Heart left ventricle (tissue), 16 donors: ENCODE measurements at regions of chr7 and their contacts with region 1.

Region 1: DNA sequence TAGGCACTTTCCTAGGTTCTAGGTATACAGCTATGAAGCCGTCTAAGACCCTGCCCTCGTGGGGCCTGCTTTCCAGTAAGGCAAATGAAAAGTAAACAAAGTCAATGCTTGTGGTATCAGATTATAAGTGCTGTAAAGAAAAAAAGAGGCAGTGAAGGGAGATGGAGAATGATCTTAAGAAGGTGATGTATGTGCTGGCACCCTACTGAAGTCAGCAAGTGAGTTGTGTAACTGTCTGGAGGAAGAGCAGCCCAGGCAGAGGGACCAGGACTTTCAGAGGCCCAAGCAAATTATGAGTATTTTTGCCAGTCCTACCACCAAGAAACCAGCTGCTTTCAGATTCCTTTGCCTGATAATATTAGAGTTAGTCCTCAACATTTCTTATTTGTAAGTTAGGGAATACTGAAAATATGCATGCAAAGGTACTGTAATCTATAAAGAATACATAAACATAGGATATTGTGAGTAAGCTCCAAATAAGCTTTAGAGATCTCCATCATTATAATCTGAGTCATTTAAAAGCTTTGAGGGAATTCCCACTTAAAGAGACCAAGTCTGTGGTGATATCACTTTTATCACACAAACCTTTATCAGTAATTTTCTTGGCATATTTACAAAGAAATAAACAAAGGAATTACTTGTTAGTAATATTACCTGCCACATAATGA is 329.2 kb upstream of the LRGUK start:
- DNase-seq: no peak
- ATAC-seq: no peak
- H3K4me3 ChIP-seq: no peak overlapping the region
- H3K27ac ChIP-seq: no peak overlapping the region
- H3K4me1 ChIP-seq: peaks cover 0 to 17% (median 7%) of the 10 kb centered on the region in 12 donors
- H3K27me3 ChIP-seq: no peaks in the 10 kb centered on the region
- CTCF ChIP-seq: no peak
- POLR2A ChIP-seq: no peak

Region 2: GRCh38 chr7:133452577-133452976 is 345.4 kb before region 1 on chr7:
- intact Hi-C with region 1: no loop called
- DNase-seq: no peak
- ATAC-seq: no peak
- H3K4me3 ChIP-seq: no peak overlapping the region
- H3K27ac ChIP-seq: no peak overlapping the region
- H3K4me1 ChIP-seq: no peaks in the 10 kb centered on the region
- H3K27me3 ChIP-seq: no peaks in the 10 kb centered on the region
- CTCF ChIP-seq: no peak
- POLR2A ChIP-seq: no peak

Region 3: DNA sequence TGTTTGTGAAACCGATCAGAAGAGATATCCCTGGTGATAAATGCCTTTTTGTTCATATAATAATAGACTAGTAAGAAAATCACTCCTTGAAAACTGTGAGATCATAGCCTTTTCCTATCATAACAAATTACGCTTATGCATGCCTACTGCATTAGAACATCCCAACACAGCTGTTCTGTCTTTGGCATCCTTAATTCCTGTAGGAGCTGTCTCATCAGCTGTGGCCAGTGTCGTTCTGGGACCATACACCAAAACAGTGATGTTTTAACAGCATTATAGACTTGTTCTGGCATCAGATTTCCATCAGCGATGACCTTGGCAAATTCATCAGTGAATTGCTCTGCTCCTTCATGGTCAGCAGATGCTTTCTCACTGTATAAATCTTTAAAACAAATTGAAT is 94.4 kb before region 1 on chr7:
- intact Hi-C with region 1: no loop called
- DNase-seq: no peak
- ATAC-seq: peak in 3 of 4 donors; percentile 44 to 87 (median 68)
- H3K4me3 ChIP-seq: no peak overlapping the region
- H3K27ac ChIP-seq: no peak overlapping the region
- H3K4me1 ChIP-seq: peaks cover 0 to 5% (median 0%) of the 10 kb centered on the region in 12 donors
- H3K27me3 ChIP-seq: no peaks in the 10 kb centered on the region
- CTCF ChIP-seq: no peak
- POLR2A ChIP-seq: no peak

Region 4: GRCh38 chr7:133735222-133735621 is 62.7 kb before region 1 on chr7:
- intact Hi-C with region 1: no loop called
- DNase-seq: no peak
- ATAC-seq: no peak
- H3K4me3 ChIP-seq: no peak overlapping the region
- H3K27ac ChIP-seq: no peak overlapping the region
- H3K4me1 ChIP-seq: no peaks in the 10 kb centered on the region
- H3K27me3 ChIP-seq: no peaks in the 10 kb centered on the region
- CTCF ChIP-seq: no peak
- POLR2A ChIP-seq: no peak

Region 5: DNA sequence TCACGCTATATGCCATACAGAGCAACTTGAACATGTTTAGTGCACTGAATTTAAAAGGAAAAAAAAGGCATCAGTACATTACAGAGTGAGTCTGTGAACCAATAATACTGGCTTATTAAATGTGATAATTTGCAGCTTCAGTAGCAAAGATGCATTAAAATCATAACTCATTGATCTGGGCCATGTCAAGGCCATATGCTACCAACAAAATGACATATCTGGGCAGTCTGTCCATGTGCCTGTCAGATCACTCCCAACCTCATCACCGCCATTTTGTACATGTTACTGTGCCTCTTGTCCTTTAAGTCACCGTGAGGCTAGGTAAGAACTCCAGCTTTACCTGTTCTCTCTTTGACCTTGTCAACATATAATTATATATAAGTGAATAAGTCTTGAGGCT is 21.7 kb after region 1 on chr7:
- intact Hi-C with region 1: loop called in 1 of 10 experiments (anchors 2 kb)
- DNase-seq: no peak
- ATAC-seq: no peak
- H3K4me3 ChIP-seq: no peak overlapping the region
- H3K27ac ChIP-seq: no peak overlapping the region
- H3K4me1 ChIP-seq: peaks cover 0 to 8% (median 3%) of the 10 kb centered on the region in 12 donors
- H3K27me3 ChIP-seq: no peaks in the 10 kb centered on the region
- CTCF ChIP-seq: no peak
- POLR2A ChIP-seq: no peak